ENCODE measurements at regions of chr19 and their contacts with region 1.

Region 1: GRCh38 chr19:40633207-40633606 is 32.0 kb downstream of the LTBP4 start:
- DNase-seq: no peak
- H3K4me3 ChIP-seq: no peak overlapping the region
- H3K27ac ChIP-seq: peak overlapping the region; percentile 68
- H3K4me1 ChIP-seq: peaks cover 6% of the 10 kb centered on the region
- H3K27me3 ChIP-seq: no peaks in the 10 kb centered on the region
- CTCF ChIP-seq: no peak
- POLR2A ChIP-seq: no peak

Region 2: DNA sequence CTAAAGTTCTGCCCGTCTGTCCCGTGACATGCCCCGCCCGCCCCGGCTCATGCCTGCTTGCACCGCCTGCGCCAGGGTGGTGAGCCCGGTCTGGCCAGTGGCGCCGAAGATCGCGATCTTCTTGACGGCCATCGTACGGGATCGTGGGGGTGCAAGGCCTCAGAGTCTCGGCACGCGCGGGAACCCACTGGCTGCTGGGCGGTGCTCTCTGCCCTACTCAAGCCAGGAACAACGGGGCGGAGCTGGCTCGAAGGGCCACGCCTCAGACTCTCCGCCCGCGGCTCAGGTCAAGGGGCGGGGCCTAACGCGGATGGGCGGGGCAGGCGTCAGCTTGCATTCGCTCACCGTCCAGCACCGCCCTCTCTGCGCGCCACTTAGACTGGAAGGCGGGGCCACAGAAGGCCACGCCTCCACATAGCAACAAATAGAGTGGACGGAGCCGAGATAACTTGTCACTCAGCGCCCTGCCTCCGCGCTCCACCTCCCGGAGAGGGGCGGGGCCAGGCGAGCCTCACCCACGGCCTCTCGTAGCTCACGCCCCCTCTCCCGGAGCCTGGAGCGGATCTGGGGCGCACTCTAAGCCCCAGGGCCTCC is 167.6 kb before region 1 on chr19 and contains the start of gene BLVRB:
- intact Hi-C with region 1: loop called (anchors 10 kb)
- DNase-seq: peak; percentile 99 to 100
- H3K4me3 ChIP-seq: peak within 1 kb of the TSS; percentile 73 to 85
- H3K27ac ChIP-seq: peak within 1 kb of the TSS; percentile 95
- H3K4me1 ChIP-seq: peaks cover 45% of the 10 kb centered on the region
- H3K27me3 ChIP-seq: no peaks in the 10 kb centered on the region
- CTCF ChIP-seq: peak in 1 of 3 experiments; percentile 15
- POLR2A ChIP-seq: peak in 1 of 2 donors; percentile 96
- total RNA-seq, gene BLVRB: 357 TPM

Region 3: DNA sequence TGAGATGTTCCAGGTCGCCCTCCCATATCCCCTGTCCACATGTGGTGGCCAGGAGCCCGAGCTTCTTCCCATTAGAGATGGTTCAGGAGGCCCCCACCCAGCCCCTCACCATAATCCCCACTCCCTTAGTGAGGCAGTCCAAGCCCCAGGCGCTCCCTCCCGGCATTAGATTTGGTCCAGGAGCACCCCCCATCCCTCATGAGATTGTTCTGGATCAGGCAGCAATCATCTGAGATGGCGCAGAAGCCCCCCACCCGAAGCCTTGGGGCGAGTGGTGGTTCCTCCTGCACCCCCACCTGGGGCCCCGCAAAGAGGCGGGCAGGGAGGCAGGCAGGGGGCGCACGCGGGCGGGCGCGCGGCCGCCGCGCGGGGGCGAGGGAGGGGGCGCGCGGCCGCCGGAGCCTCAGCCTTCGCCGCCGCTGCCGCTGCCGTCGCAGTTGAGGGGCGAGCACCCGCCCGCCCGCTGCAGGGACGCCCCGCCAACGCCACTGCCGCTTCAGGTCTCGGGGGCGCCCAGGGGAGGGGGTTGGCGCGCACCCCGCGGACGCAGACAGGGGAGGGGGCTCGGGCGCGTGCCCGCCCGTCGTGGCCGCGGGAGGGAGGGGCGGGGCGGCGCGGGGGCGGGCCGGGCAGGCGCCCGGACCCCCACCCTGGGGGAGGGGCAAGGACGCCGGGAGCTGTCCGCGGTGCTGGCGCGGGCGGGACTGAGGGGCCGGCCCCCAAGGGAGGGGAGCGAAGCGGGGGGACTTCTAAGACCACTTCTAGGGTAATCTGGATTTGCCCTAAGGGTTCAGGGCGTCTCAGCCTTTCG is 102.9 kb before region 1 on chr19:
- intact Hi-C with region 1: loop called (anchors 10 kb)
- DNase-seq: no peak
- H3K4me3 ChIP-seq: peak overlapping the region in 1 of 2 donors; percentile 39
- H3K27ac ChIP-seq: no peak overlapping the region
- H3K4me1 ChIP-seq: peaks cover 8% of the 10 kb centered on the region
- H3K27me3 ChIP-seq: no peaks in the 10 kb centered on the region
- CTCF ChIP-seq: no peak
- POLR2A ChIP-seq: no peak